Activated CD8-positive, alpha-beta T cell treated with anti-CD3 and anti-CD28 coated beads for 36 hours (primary cell): ENCODE measurements at regions of chr12 and their contacts with region 1.

Region 1: GRCh38 chr12:674272-674781 is 11.1 kb upstream of the NINJ2 start:
- DNase-seq: peak; percentile 96
- ATAC-seq: peak; percentile 92
- H3K4me3 Mint-ChIP-seq: peak overlapping the region; percentile 72
- H3K27ac Mint-ChIP-seq: peak overlapping the region; percentile 97
- H3K4me1 Mint-ChIP-seq: peaks cover 72% of the 10 kb centered on the region
- H3K27me3 Mint-ChIP-seq: no peaks in the 10 kb centered on the region
- CTCF ChIP-seq: no peak

Region 2: DNA sequence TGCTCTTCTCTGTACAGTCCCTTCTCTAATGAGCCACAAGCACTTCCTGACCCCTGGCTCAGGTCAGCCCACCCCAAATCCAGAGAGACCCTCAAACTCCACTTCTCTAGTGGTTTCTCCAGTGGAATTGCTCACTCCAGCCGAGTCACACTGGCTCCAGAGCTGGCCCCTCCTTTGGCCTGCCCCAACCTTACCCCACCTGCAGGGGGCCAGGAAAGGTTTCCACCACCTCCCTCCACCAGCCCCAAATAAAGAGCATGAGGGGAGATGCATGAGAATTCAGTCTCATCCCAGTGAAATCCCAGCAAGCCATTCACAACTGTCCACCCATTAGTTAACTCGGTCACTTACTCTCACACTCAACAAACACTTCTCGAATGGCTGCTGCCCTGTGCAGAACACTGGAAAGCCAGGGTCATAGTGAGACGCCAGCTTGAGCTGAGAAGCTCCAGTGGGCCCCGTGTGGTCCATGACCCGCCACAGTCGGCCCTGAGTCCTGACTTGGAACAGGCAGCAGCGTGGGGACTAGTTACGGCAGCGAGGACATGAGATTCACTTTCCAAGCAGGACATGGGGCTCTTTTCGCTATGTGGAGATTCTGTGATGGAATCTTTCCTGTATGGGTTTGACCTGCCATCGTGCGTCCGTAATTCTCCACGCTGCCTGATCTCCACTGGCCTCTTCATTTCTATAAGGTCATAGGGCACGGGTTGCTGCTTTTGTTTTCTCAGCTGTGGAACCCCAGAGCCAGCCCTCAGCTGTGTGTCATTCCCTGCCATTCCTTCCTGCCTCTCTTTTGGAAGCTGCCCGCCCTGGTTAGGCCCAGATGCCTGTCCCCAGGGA is 504.6 kb before region 1 on chr12:
- CTCF ChIA-PET with region 1: no interaction called
- POLR2A ChIA-PET with region 1: no interaction called
- intact Hi-C with region 1: no loop called
- DNase-seq: no peak
- ATAC-seq: peak; percentile 49
- H3K4me3 Mint-ChIP-seq: no peak overlapping the region
- H3K27ac Mint-ChIP-seq: no peak overlapping the region
- H3K4me1 Mint-ChIP-seq: peaks cover 14% of the 10 kb centered on the region
- H3K27me3 Mint-ChIP-seq: no peaks in the 10 kb centered on the region
- CTCF ChIP-seq: no peak

Region 3: DNA sequence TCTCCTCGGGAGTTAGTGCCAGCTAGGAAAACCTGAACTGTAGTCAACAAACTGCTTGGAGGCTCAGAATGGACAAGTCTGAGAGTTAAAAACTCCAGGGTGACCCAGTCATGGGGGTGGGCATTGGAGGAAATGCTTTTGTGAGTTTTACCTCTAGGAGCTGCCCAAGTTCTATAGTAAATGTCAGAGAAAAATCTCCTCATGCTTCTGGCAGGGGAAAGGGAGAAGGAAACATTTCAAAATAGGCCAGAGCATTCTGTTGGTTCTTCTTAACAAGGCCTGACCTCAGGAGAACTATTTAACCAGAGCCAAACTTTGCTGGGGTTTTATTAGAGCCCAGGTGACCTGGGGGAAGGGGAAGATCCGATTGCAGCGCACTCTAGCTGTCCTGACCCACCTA is 23.3 kb before region 1 on chr12:
- CTCF ChIA-PET with region 1: no interaction called
- POLR2A ChIA-PET with region 1: no interaction called
- intact Hi-C with region 1: no loop called
- DNase-seq: no peak
- ATAC-seq: no peak
- H3K4me3 Mint-ChIP-seq: no peak overlapping the region
- H3K27ac Mint-ChIP-seq: no peak overlapping the region
- H3K4me1 Mint-ChIP-seq: peaks cover 14% of the 10 kb centered on the region
- H3K27me3 Mint-ChIP-seq: no peaks in the 10 kb centered on the region
- CTCF ChIP-seq: no peak

Region 4: DNA sequence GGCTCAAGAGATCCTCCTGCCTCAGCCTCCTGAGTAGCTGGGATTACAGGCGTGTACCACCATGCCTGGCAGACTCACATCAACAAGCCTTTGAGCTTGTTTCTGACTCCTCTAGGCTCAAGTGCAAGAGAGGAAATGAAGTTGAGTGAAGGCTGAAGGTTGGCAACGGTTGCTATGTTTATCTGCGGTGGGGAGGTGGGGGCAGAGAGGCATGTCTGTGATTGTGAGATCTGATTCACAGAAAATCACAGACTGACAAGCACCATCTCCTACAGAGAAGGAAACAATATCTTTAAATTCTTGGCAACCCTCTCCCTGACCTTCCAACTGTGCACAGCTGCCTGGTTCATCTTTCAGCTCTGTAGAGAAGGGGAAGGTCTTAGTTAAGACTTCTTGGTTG is 11.1 kb after region 1 on chr12:
- CTCF ChIA-PET with region 1: interaction called, 4 read pairs
- POLR2A ChIA-PET with region 1: interaction called, 14 read pairs
- intact Hi-C with region 1: no loop called
- DNase-seq: peak; percentile 95
- ATAC-seq: peak; percentile 91
- H3K4me3 Mint-ChIP-seq: peak overlapping the region; percentile 24
- H3K27ac Mint-ChIP-seq: peak overlapping the region; percentile 83
- H3K4me1 Mint-ChIP-seq: peaks cover 31% of the 10 kb centered on the region
- H3K27me3 Mint-ChIP-seq: no peaks in the 10 kb centered on the region
- CTCF ChIP-seq: no peak

Region 5: GRCh38 chr12:712172-712863 is 38.0 kb after region 1 on chr12:
- CTCF ChIA-PET with region 1: interaction called, 3 read pairs
- POLR2A ChIA-PET with region 1: interaction called, 7 read pairs
- intact Hi-C with region 1: loop called (anchors 5 kb)
- DNase-seq: no peak
- ATAC-seq: no peak
- H3K4me3 Mint-ChIP-seq: no peak overlapping the region
- H3K27ac Mint-ChIP-seq: peak overlapping the region; percentile 67
- H3K4me1 Mint-ChIP-seq: peaks cover 35% of the 10 kb centered on the region
- H3K27me3 Mint-ChIP-seq: no peaks in the 10 kb centered on the region
- CTCF ChIP-seq: no peak

Region 6: GRCh38 chr12:789852-790563 is 115.7 kb after region 1 on chr12:
- CTCF ChIA-PET with region 1: interaction called, 4 read pairs
- POLR2A ChIA-PET with region 1: interaction called, 3 read pairs
- intact Hi-C with region 1: loop called (anchors 5 kb)
- DNase-seq: no peak
- ATAC-seq: peak; percentile 51
- H3K4me3 Mint-ChIP-seq: no peak overlapping the region
- H3K27ac Mint-ChIP-seq: peak overlapping the region; percentile 68
- H3K4me1 Mint-ChIP-seq: peaks cover 87% of the 10 kb centered on the region
- H3K27me3 Mint-ChIP-seq: no peaks in the 10 kb centered on the region
- CTCF ChIP-seq: no peak